ENCODE measurements at regions of chr11 and their contacts with region 1.

Region 1: DNA sequence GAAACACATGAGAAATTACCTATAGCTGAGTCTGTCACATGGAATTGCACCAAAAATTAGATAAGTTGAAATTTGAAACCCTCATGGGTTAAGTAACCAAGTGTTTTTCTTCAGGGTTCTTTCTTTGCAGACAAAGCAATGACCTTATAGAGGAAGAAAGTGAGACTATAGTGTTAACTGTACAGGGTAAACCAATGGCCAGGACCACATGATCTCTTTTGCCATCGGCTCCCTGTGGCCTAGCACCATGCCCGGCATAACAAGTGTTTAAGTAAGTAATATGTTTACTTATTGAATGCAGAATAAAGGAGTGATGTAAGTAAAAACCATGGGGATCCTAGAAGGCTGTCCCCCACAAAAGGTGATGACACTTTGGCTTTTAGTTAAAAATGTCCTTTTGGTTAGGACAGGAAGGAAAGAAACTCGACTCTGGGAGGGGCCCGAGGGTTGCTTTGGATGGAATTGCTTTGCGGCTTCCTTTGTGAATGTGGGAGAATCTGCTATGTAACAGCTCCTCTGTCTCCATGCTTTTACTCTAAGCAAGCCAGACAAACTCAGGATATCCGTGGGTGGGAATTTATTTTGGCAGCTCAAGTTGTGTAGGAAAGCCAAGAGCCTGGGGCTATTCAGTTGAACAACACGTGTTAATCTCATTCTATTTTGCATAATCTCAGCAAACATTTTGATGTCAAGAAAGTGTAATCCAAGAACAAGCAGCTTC is 454.7 kb downstream of the INSC start:
- DNase-seq: no peak
- ATAC-seq: no peak
- H3K4me3 ChIP-seq: no peak overlapping the region
- H3K27ac ChIP-seq: no peak overlapping the region
- H3K4me1 ChIP-seq: no peaks in the 10 kb centered on the region
- H3K27me3 ChIP-seq: 0 out of 2 replicates have a peak, but pooled peaks cover 7% of the 10 kb centered on the region
- CTCF ChIP-seq: no peak
- POLR2A ChIP-seq: no peak
- RAD21 ChIP-seq: no peak

Region 2: DNA sequence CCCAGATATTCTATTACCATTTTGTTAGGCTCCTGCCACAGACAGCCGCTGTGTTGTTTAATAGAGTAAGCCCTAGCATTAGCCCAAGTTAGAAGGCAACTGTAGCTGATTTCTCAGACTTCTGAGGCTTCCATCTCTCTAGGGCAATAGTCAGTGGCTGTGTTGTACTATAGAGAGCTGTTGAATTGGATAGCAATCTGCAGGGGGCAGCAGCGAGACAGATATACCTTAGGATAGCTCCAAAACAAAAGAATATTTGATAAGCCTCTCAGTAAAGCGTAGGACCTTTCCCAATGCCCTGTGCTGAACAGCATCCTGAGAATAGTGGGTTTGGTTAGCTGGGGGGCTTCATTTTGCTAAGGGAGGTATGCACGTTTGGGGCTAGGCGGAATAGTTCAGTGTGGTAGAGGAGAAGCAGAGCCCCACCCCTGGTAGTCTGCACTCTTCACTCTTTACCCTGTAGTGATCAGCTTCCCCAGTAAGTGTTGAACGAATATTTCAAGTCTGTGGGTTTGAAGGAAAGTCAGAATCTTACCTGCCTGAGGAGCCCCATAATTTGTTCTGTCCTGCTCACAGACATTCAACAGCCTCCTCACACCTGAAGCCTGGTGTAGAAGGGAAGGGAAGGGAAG is 60.3 kb after region 1 on chr11:
- CTCF ChIA-PET with region 1: no interaction called
- POLR2A ChIA-PET with region 1: no interaction called
- RAD21 ChIA-PET with region 1: no interaction called
- intact Hi-C with region 1: loop called (anchors 2 kb)
- DNase-seq: peak; percentile 16
- ATAC-seq: peak; percentile 92
- H3K4me3 ChIP-seq: no peak overlapping the region
- H3K27ac ChIP-seq: no peak overlapping the region
- H3K4me1 ChIP-seq: no peaks in the 10 kb centered on the region
- H3K27me3 ChIP-seq: peaks cover 16% of the 10 kb centered on the region; the same call in 1 of the 2 replicates
- CTCF ChIP-seq: peak in 2 of 3 experiments; percentile 51 to 55; a peak in 4 of 6 replicates
- POLR2A ChIP-seq: no peak
- RAD21 ChIP-seq: peak; percentile 35; the same call in 1 of the 2 replicates

Measured in HCT116 (cell line).